Calu3 (cell line): ENCODE measurements at regions of chr18 and their contacts with region 1.

Region 1: DNA sequence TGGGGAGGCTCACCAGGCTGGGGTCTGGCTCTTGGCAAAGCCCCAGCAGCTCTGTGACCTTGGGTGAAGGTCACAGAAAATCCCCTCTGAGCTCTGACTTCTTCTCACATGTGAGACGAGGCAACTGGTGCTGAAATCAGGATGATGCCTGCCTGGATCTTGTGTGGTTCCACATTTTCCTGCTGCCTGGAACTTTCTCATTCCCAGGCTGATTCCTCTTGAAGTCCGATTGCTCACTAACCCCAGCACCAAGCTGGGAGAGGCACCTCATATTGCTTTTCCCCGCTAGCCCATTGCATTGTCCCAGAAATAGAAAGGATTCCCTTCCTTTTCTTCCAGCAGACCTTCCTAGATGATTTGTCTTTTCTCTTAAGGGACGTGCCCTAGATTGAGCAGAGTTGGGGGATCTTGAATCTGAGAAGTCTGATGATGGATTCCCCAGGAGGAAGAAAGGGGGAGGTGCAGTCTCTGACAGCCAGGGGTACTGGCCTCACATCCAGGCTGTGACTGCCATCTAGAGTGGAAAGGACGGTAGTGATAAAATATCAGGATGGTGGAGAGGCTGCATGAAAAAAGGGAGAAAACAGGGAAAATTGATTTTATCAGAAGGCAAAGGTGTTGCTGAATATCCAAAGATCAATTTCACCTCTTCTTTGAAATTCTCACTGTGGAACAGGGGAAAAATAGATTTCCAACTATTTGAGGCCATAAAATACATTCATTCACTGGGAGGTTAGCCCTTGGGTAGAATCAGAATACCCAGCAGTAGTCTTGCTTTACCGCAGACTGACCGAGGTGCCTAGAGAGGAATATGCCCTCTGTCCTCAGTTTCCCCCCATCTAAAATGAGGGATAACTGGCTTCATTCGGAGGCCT is 96.3 kb downstream of the FAM210A start:
- DNase-seq: peak; percentile 54
- H3K4me3 Mint-ChIP-seq: no peak overlapping the region
- H3K27ac Mint-ChIP-seq: no peak overlapping the region
- H3K4me1 Mint-ChIP-seq: no peaks in the 10 kb centered on the region
- H3K27me3 Mint-ChIP-seq: peaks cover 26% of the 10 kb centered on the region
- CTCF ChIP-seq: peak; percentile 52

Region 2: GRCh38 chr18:12990967-12991838 is 638.9 kb before region 1 on chr18 and contains the start of gene CEP192:
- CTCF ChIA-PET with region 1: no interaction called
- intact Hi-C with region 1: loop called (anchors 10 kb)
- DNase-seq: peak; percentile 98
- H3K4me3 Mint-ChIP-seq: peak within 1 kb of the TSS; percentile 90
- H3K27ac Mint-ChIP-seq: peak within 1 kb of the TSS; percentile 74
- H3K4me1 Mint-ChIP-seq: peaks cover 15% of the 10 kb centered on the region
- H3K27me3 Mint-ChIP-seq: no peaks in the 10 kb centered on the region
- CTCF ChIP-seq: no peak
- total RNA-seq, gene CEP192: 39.2 and 41.3 TPM in 2 replicates